ENCODE measurements at regions of chr3 and their contacts with region 1.

Region 1: DNA sequence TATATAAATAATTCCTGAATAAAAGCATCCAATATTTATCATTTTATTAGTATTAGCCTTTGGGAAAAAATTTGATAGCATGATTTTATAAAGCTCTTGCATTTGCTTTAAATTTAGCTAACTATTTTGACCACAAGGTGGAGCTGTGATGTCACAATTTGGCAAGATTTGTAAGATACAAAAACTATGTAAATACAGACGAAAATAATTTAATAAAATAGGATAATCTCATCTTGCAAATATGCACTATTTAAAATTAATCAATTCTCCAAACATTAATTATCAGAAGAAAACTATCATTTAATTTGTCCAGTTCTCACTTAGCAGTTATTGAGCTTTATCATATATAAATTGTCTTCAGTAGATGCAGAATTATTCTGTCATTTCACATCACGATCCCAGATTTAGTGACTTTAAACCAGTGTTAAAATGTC is 95.4 kb downstream of the PLOD2 start:
- DNase-seq: no peak
- H3K4me3 ChIP-seq: no peak overlapping the region
- H3K27ac ChIP-seq: no peak overlapping the region
- H3K4me1 ChIP-seq: no peaks in the 10 kb centered on the region
- H3K27me3 ChIP-seq: no peaks in the 10 kb centered on the region
- CTCF ChIP-seq: peak; percentile 59 to 78 (median 67)
- EP300 ChIP-seq: no peak
- POLR2A ChIP-seq: no peak

Region 2: GRCh38 chr3:146160964-146161662 is 95.5 kb after region 1 on chr3 and contains the start of gene PLOD2:
- in situ Hi-C with region 1: loop called in 1 of 4 experiments (anchors 25 kb)
- intact Hi-C with region 1: no loop called
- DNase-seq: peak; percentile 83
- H3K4me3 ChIP-seq: peak within 1 kb of the TSS; percentile 41 to 84 (median 76)
- H3K27ac ChIP-seq: peak within 1 kb of the TSS; percentile 92 to 97 (median 95)
- H3K4me1 ChIP-seq: peaks cover 10 to 70% (median 48%) of the 10 kb centered on the region in 4 donors
- H3K27me3 ChIP-seq: no peaks in the 10 kb centered on the region
- CTCF ChIP-seq: no peak
- EP300 ChIP-seq: no peak
- POLR2A ChIP-seq: peak; percentile 89
- total RNA-seq, gene PLOD2: 18.9 to 178 (median 92.0) TPM

Region 3: GRCh38 chr3:146189519-146190173 is 124.1 kb after region 1 on chr3:
- in situ Hi-C with region 1: loop called in 1 of 4 experiments (anchors 25 kb)
- intact Hi-C with region 1: loop called (anchors 1 kb)
- DNase-seq: no peak
- H3K4me3 ChIP-seq: no peak overlapping the region
- H3K27ac ChIP-seq: no peak overlapping the region
- H3K4me1 ChIP-seq: no peaks in the 10 kb centered on the region
- H3K27me3 ChIP-seq: no peaks in the 10 kb centered on the region
- CTCF ChIP-seq: peak; percentile 71 to 82 (median 73)
- EP300 ChIP-seq: no peak
- POLR2A ChIP-seq: no peak

Region 4: DNA sequence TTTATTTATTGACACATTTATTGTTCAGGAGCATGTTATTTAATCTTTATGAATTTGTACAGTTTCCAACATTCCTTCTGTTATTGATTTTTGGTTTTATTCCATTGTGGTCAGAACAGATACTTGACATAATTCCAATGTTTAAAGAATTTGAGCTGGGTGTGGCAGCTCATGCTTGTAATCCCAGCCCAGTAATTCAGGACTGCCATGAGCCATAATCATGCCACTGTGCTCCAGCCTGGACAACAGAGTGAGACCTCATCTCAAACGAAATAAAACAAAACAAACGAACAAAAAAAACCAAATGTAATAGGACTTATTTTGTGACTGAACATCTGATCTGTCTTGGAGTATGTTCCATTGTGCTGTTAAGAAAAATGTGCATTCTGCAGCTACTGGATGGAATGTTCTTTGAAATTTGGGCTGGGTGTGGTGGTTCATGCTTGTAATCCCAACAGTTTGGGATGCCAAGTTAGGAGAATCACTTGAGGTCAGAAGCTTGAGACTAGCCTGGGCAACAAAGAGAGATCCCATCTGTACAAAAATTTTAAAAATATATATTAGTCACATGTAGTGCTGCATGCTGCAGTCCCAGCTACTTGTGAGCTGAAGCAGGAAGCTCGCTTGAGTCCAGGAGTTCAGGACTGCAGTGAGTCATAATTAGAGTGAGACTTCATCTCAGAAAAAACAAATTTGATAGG is 248.0 kb after region 1 on chr3:
- in situ Hi-C with region 1: loop called in 2 of 4 experiments (anchors 25 kb)
- intact Hi-C with region 1: loop called (anchors 5 kb)
- DNase-seq: no peak
- H3K4me3 ChIP-seq: no peak overlapping the region
- H3K27ac ChIP-seq: no peak overlapping the region
- H3K4me1 ChIP-seq: peaks cover 0 to 16% (median 0%) of the 10 kb centered on the region in 4 donors
- H3K27me3 ChIP-seq: no peaks in the 10 kb centered on the region
- CTCF ChIP-seq: no peak
- EP300 ChIP-seq: no peak
- POLR2A ChIP-seq: no peak

Region 5: DNA sequence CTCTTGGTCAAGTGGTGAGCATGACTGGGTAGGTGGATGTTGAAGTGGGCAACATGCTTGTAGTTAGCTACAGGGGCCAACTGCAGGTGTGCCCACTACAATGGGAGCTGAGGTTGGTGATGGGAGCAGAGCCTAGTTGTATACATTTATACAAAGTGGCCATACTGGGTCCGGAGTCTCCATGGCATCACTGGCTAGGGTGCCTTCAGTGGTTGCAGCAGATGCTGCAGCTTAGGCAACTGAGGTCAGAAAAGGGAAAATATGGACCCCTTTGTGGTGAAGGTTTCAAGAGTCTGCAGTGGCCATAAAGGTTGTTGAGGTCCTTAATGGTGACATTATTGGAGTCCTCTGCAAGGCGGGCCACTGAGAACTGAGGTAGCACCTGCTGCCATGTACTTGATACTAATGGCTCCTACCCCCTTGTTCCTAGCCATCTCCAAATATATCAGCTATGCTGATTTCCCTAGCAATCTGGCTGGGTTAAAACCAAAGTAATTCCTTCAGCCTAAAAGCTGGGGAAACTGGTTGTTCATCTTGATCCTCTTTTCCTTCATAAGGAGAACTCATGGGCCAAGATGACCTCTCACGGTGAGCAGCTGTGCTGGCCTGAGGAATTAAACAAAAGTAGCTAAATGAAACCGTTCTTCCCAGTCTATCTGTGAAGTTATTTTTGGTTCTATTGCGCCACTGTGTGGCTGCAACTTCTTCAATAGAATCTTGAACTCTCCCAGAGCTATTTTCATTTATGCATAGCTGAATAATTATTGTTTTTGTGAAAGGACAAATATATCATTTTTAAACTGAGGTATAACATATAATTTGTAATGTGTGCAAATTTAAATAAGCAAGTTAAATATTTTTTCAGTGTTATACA is 261.3 kb after region 1 on chr3:
- in situ Hi-C with region 1: loop called in 3 of 4 experiments (anchors 10 to 25 kb)
- intact Hi-C with region 1: no loop called
- DNase-seq: peak; percentile 49
- H3K4me3 ChIP-seq: no peak overlapping the region
- H3K27ac ChIP-seq: no peak overlapping the region
- H3K4me1 ChIP-seq: no peaks in the 10 kb centered on the region
- H3K27me3 ChIP-seq: no peaks in the 10 kb centered on the region
- CTCF ChIP-seq: peak; percentile 43 to 76 (median 61)
- EP300 ChIP-seq: no peak
- POLR2A ChIP-seq: no peak

Region 6: DNA sequence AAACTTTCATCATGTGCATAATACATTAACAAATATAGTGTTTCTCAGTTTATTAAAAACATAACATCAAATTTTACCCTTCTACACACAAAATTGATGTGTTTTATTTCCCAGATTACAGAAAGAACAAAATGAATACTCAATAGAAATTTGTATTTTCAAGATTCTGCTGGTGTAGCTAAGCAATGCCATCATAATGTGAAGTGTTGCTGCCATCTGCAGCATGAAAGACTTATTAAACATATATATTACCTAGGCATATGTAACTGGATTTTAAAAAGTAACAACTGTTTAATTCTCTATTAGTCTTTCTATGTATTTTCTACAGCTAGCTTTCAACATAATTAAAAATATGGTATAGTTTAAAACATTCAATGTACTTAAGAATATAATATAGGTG is 512.1 kb after region 1 on chr3:
- in situ Hi-C with region 1: loop called in 2 of 4 experiments (anchors 25 kb)
- intact Hi-C with region 1: no loop called
- DNase-seq: peak; percentile 25
- H3K4me3 ChIP-seq: no peak overlapping the region
- H3K27ac ChIP-seq: no peak overlapping the region
- H3K4me1 ChIP-seq: no peaks in the 10 kb centered on the region
- H3K27me3 ChIP-seq: no peaks in the 10 kb centered on the region
- CTCF ChIP-seq: peak; percentile 38 to 50 (median 42)
- EP300 ChIP-seq: no peak
- POLR2A ChIP-seq: no peak